ENCODE measurements at regions of chr1 and their contacts with region 1.

Region 1: GRCh38 chr1:228405987-228406265 is 709 bp downstream of the TRIM11 start:
- DNase-seq: no peak
- ATAC-seq: peak; percentile 5
- H3K4me3 Mint-ChIP-seq: peak overlapping the region; percentile 99
- H3K27ac Mint-ChIP-seq: peak overlapping the region; percentile 95
- H3K4me1 Mint-ChIP-seq: peaks cover 42% of the 10 kb centered on the region
- H3K27me3 Mint-ChIP-seq: no peaks in the 10 kb centered on the region

Region 2: GRCh38 chr1:228165372-228166169 is 240.4 kb before region 1 on chr1 and contains the start of gene IBA57:
- POLR2A ChIA-PET with region 1: interaction called, 14 read pairs
- DNase-seq: peak; percentile 100
- ATAC-seq: peak; percentile 88
- H3K4me3 Mint-ChIP-seq: peak within 1 kb of the TSS; percentile 94
- H3K27ac Mint-ChIP-seq: peak within 1 kb of the TSS; percentile 96
- H3K4me1 Mint-ChIP-seq: peaks cover 33% of the 10 kb centered on the region
- H3K27me3 Mint-ChIP-seq: no peaks in the 10 kb centered on the region
- total RNA-seq, gene IBA57: 9.7 to 12.2 TPM

Region 3: GRCh38 chr1:228275739-228276421 is 130.0 kb before region 1 on chr1:
- POLR2A ChIA-PET with region 1: interaction called, 14 read pairs
- DNase-seq: peak; percentile 85
- ATAC-seq: peak; percentile 93
- H3K4me3 Mint-ChIP-seq: peak overlapping the region; percentile 77
- H3K27ac Mint-ChIP-seq: peak overlapping the region; percentile 61
- H3K4me1 Mint-ChIP-seq: peaks cover 6% of the 10 kb centered on the region
- H3K27me3 Mint-ChIP-seq: no peaks in the 10 kb centered on the region

Region 4: DNA sequence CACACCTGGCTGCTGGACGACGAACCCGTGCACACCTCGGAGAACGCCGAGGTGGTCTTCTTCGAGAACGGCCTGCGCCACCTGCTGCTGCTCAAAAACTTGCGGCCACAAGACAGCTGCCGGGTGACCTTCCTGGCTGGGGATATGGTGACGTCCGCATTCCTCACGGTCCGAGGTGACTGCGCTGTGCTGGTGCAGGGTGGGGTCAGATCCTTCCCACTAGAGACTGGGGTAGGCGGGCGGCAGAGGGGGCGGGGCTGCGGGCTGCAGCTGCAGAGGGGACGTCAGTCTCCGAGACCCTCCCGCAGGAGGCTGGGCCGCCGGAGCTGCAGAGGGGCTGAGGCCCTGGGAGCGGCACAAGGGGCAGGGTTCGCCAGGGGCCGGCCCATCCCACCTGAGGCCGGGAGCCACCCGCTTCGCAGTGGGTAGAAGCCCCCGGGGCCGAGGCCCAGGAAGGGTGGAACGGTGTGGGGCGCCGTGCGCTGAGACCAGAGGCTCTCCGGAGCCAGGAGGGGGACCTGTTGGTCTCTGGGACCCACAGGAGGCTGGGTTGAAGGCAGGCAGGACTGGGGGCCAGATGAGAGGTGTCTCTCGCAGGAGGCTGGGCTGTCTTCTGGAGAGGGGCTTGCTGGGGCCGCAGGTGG is 89.9 kb before region 1 on chr1:
- POLR2A ChIA-PET with region 1: no interaction called
- DNase-seq: peak; percentile 18
- ATAC-seq: no peak
- H3K4me3 Mint-ChIP-seq: no peak overlapping the region
- H3K27ac Mint-ChIP-seq: no peak overlapping the region
- H3K4me1 Mint-ChIP-seq: no peaks in the 10 kb centered on the region
- H3K27me3 Mint-ChIP-seq: no peaks in the 10 kb centered on the region

Region 5: DNA sequence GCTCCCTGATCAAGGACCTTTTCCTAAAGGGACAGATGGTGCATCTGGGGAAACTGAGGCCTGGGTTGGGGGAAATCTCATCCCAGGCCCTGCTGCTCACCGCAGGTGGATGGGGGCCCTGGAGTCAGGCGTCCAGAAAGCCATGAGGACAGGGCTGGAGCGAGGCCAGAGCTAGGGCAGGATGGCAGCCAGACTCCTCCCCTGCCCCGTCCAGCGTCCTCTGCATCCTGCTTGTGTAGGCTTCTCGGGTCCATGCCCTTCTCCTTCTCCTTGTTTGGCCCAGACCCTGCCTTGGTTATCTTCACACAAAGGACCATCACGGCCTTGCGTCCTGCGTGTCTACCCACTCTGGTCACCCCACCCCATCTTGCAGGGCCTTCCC is 42.2 kb before region 1 on chr1:
- POLR2A ChIA-PET with region 1: interaction called, 11 read pairs
- DNase-seq: no peak
- ATAC-seq: no peak
- H3K4me3 Mint-ChIP-seq: no peak overlapping the region
- H3K27ac Mint-ChIP-seq: no peak overlapping the region
- H3K4me1 Mint-ChIP-seq: no peaks in the 10 kb centered on the region
- H3K27me3 Mint-ChIP-seq: no peaks in the 10 kb centered on the region

Region 6: DNA sequence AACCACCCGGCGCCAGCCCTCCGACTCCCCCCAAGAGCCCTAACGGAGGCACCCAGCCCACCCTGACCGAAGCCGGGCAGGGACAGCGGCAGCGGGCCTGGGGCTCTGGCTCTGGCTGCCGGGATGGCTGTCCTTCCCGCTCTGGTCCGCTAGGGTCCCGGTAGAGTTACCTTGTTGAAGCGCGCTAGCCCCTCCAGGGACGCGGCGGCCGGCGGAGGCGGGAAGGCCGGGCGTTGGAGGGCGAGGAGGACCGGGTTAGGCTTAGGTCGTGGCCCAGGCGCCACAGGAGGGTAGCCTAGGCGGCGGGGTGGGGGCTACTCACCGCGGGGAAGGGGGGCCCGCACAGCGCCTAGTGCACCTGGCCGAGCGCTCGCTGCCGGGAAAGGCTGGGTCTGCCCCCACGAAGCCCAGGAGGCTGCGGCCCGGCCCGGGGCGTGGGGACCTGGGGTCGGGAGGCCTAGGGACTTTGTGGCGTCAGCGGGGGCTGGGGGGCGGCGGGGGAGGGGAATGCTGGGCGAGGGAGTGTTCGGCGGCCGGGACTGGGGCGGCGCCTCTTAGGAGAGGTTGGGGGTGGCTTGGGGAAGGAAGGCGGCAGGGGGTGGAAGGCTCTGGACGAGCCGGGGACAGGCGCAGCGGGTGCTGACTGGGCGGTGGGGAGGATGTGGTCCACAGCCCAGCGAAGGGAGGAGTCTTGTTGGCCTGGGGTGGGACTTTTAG is 10.4 kb after region 1 on chr1 and contains the start of gene TRIM17:
- POLR2A ChIA-PET with region 1: interaction called, 12 read pairs
- DNase-seq: peak; percentile 58
- ATAC-seq: peak; percentile 84
- H3K4me3 Mint-ChIP-seq: peak within 1 kb of the TSS; percentile 92
- H3K27ac Mint-ChIP-seq: peak within 1 kb of the TSS; percentile 82
- H3K4me1 Mint-ChIP-seq: peaks cover 18% of the 10 kb centered on the region
- H3K27me3 Mint-ChIP-seq: peaks cover 14% of the 10 kb centered on the region
- total RNA-seq, gene TRIM17: 3.4 to 4.3 TPM

Region 7: GRCh38 chr1:228464487-228464983 is 58.6 kb after region 1 on chr1:
- POLR2A ChIA-PET with region 1: interaction called, 107 read pairs
- DNase-seq: peak; percentile 87
- ATAC-seq: peak; percentile 81
- H3K4me3 Mint-ChIP-seq: peak overlapping the region; percentile 82
- H3K27ac Mint-ChIP-seq: peak overlapping the region; percentile 88
- H3K4me1 Mint-ChIP-seq: peaks cover 58% of the 10 kb centered on the region
- H3K27me3 Mint-ChIP-seq: peaks cover 17% of the 10 kb centered on the region

Region 8: GRCh38 chr1:229019663-229020271 is 613.8 kb after region 1 on chr1:
- POLR2A ChIA-PET with region 1: no interaction called
- DNase-seq: no peak
- ATAC-seq: no peak
- H3K4me3 Mint-ChIP-seq: no peak overlapping the region
- H3K27ac Mint-ChIP-seq: no peak overlapping the region
- H3K4me1 Mint-ChIP-seq: peaks cover 2% of the 10 kb centered on the region
- H3K27me3 Mint-ChIP-seq: peaks cover 8% of the 10 kb centered on the region

Measured in activated naive CD8-positive, alpha-beta T cell treated with anti-CD3 and anti-CD28 coated beads, Interleukin-2, amount 10 ng/mL, durations not matched to agents 7 days and 5 days (primary cell).